Activated T-helper 2 cell treated with anti-CD3 and anti-CD28 coated beads, Interferon-gamma antibody, Interleukin-2, Interleukin-4, amounts not matched to agents 10 μg/mL and 5 μg/mL and 100 μg/mL, durations not matched to agents 14 hours and 24 hours and 36 hours (primary cell): ENCODE measurements at regions of chr2 and their contacts with region 1.

Region 1: DNA sequence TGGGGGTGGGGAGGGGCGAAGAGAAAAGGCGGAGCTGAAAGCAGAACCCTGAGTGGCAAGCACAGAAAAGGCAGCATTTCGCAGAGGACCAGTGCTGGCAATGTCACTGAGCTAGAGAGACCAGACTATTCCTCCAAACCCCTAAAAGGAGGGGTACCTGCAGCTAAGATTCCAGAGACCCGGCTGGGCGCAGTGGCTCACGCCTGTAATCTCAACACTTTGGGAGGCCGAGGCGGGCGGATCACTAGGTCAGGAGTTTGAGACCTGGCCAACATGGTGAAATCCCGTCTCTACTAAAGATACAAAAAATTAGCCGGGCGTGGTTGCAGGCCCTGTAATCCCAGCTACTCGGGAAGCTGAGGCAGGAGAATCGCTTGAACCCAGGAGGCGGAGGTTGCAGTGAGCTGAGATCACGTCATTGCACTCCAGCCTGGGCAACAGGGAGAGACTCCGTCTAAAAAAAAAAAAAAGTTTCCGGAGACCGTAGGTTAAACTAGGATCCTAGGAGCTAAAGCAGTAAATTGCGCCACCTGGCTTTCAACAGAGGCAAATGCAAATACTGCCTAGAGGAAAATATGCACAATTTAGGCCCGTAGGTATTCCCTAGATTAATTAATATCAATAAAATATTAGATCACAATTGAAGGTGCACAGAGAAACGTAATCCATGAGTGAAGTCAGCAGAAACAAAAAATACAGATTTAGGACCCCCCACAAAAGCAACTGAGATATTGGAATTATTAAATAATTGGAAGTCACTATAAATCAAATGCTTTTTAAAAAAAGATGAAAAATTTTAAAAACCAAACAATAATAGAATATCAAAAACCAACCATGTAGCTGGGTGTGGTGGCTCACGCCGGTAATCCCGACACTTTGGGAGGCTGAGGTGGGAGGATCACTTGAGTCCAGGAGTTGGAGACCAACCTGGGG is 4.9 kb downstream of the UCN start:
- DNase-seq: peak; percentile 31
- H3K4me3 Mint-ChIP-seq: peak overlapping the region; percentile 64
- H3K27ac Mint-ChIP-seq: peak overlapping the region; percentile 5
- H3K4me1 Mint-ChIP-seq: peaks cover 5% of the 10 kb centered on the region
- H3K27me3 Mint-ChIP-seq: peaks cover 23% of the 10 kb centered on the region

Region 2: GRCh38 chr2:27095745-27096651 is 207.4 kb before region 1 on chr2:
- intact Hi-C with region 1: loop called (anchors 1 kb)
- DNase-seq: no peak
- H3K4me3 Mint-ChIP-seq: peak overlapping the region; percentile 51
- H3K27ac Mint-ChIP-seq: peak overlapping the region; percentile 24
- H3K4me1 Mint-ChIP-seq: peaks cover 9% of the 10 kb centered on the region
- H3K27me3 Mint-ChIP-seq: no peaks in the 10 kb centered on the region

Region 3: DNA sequence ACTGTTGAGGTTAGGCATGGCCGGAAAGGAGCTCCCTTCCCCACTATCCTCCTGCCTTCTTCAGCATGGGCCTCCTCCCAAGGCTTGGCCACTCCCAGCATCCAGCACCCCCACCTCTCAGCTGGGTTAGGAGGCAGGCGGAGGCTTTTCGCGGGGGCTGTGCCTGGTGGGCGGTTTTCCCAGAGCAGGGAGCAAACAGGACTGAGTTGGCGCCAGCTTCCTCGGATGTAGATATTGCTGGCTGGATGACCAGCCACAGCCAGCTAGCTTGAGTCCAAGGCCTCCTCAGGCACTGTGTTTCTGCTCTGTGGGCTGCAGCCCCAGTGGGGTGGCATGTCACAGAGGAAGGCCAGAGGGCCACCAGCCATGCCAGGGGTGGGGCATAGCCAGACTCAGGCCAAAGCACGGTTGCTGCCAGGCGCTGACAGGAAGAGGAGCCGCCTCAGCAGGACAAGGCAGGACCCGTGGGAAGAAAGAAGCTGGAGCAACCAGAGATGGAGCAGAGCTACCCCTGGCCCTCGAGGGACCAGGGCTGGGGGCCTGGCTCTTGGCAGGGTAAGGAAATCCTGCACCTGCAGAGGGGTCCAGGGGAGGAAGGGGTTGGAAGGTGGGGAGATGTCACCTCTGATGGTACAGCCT is 154.4 kb before region 1 on chr2 and contains the start of gene TCF23:
- intact Hi-C with region 1: no loop called
- DNase-seq: no peak
- H3K4me3 Mint-ChIP-seq: no peak within 1 kb of the TSS
- H3K27ac Mint-ChIP-seq: no peak within 1 kb of the TSS
- H3K4me1 Mint-ChIP-seq: peaks cover 6% of the 10 kb centered on the region
- H3K27me3 Mint-ChIP-seq: peaks cover 11% of the 10 kb centered on the region
- total RNA-seq, gene TCF23: not detected in 2 replicates

Region 4: GRCh38 chr2:27249891-27250651 is 53.3 kb before region 1 on chr2:
- intact Hi-C with region 1: loop called (anchors 1 kb)
- DNase-seq: peak; percentile 47
- H3K4me3 Mint-ChIP-seq: no peak overlapping the region
- H3K27ac Mint-ChIP-seq: no peak overlapping the region
- H3K4me1 Mint-ChIP-seq: no peaks in the 10 kb centered on the region
- H3K27me3 Mint-ChIP-seq: peaks cover 11% of the 10 kb centered on the region

Region 5: GRCh38 chr2:27264753-27265535 is 38.4 kb before region 1 on chr2:
- intact Hi-C with region 1: loop called (anchors 5 kb)
- DNase-seq: peak; percentile 24
- H3K4me3 Mint-ChIP-seq: peak overlapping the region; percentile 60
- H3K27ac Mint-ChIP-seq: no peak overlapping the region
- H3K4me1 Mint-ChIP-seq: peaks cover 18% of the 10 kb centered on the region
- H3K27me3 Mint-ChIP-seq: peaks cover 42% of the 10 kb centered on the region

Region 6: GRCh38 chr2:27370026-27370815 is 66.9 kb after region 1 on chr2 and contains the starts of genes EIF2B4 and SNX17:
- intact Hi-C with region 1: no loop called
- DNase-seq: peak; percentile 100
- H3K4me3 Mint-ChIP-seq: peak within 1 kb of the TSS; percentile 90
- H3K27ac Mint-ChIP-seq: peak within 1 kb of the TSS; percentile 97
- H3K4me1 Mint-ChIP-seq: peaks cover 23% of the 10 kb centered on the region
- H3K27me3 Mint-ChIP-seq: no peaks in the 10 kb centered on the region
- total RNA-seq, gene EIF2B4: 43.4 and 44.8 TPM in 2 replicates
- total RNA-seq, gene SNX17: 117 and 120 TPM in 2 replicates